Endothelial cell of umbilical vein (primary cell): ENCODE measurements at regions of chr10 and their contacts with region 1.

Region 1: DNA sequence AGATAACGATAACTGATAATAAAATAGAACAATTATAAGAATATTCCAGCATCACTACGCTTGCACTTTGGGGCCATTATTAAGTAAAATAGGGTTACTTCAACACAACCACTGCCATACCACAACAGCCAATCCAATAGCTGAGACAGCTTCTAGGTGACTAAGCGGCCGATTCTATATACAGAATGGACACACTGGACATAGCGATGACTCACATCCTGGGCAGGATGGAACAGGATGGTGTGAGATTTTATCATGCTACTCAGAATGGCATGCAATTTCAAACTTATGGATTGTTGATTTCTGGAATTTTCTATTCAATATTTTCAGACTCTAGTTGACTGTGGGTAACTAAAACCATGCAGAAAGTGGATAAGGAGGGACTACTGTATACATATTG is 920.9 kb downstream of the LRMDA start:
- DNase-seq: peak; percentile 91
- H3K4me3 ChIP-seq: no peak overlapping the region
- H3K27ac ChIP-seq: peak overlapping the region; percentile 90
- H3K4me1 ChIP-seq: peaks cover 23% of the 10 kb centered on the region
- H3K27me3 ChIP-seq: no peaks in the 10 kb centered on the region
- CTCF ChIP-seq: no peak
- POLR2A ChIP-seq: peak; percentile 32

Region 2: GRCh38 chr10:75803816-75804552 is 548.3 kb before region 1 on chr10:
- CTCF ChIA-PET with region 1: no interaction called
- POLR2A ChIA-PET with region 1: no interaction called
- dilution Hi-C with region 1: no loop called
- intact Hi-C with region 1: no loop called
- DNase-seq: no peak
- H3K4me3 ChIP-seq: no peak overlapping the region
- H3K27ac ChIP-seq: no peak overlapping the region
- H3K4me1 ChIP-seq: no peaks in the 10 kb centered on the region
- H3K27me3 ChIP-seq: no peaks in the 10 kb centered on the region
- CTCF ChIP-seq: no peak
- POLR2A ChIP-seq: no peak

Region 3: GRCh38 chr10:76190634-76191270 is 161.5 kb before region 1 on chr10:
- CTCF ChIA-PET with region 1: no interaction called
- POLR2A ChIA-PET with region 1: no interaction called
- dilution Hi-C with region 1: no loop called
- intact Hi-C with region 1: no loop called
- DNase-seq: no peak
- H3K4me3 ChIP-seq: no peak overlapping the region
- H3K27ac ChIP-seq: no peak overlapping the region
- H3K4me1 ChIP-seq: no peaks in the 10 kb centered on the region
- H3K27me3 ChIP-seq: no peaks in the 10 kb centered on the region
- CTCF ChIP-seq: no peak
- POLR2A ChIP-seq: no peak

Region 4: GRCh38 chr10:76309741-76310587 is 42.3 kb before region 1 on chr10:
- CTCF ChIA-PET with region 1: no interaction called
- POLR2A ChIA-PET with region 1: no interaction called
- dilution Hi-C with region 1: no loop called
- intact Hi-C with region 1: no loop called
- DNase-seq: peak; percentile 31
- H3K4me3 ChIP-seq: no peak overlapping the region
- H3K27ac ChIP-seq: no peak overlapping the region
- H3K4me1 ChIP-seq: peaks cover 6% of the 10 kb centered on the region
- H3K27me3 ChIP-seq: no peaks in the 10 kb centered on the region
- CTCF ChIP-seq: no peak
- POLR2A ChIP-seq: no peak

Region 5: DNA sequence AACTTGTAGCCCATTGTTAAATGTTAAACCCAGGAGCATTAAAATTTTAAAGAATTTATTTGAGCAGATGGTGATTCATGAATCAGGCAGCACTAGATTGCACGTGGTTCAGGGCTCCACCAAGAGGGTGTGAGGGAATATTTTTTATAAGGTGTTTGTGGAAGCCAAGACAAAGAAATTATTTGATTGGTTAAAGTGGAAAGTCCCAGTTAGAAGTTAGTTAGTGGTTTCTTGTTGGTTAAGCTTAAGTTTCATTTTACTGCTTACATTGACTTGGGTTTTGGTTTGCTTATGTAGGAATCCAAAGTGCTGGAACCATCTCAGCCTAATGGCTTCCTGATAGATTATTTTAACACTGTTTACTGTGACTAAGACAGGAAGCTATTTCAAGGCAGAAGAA is 14.7 kb before region 1 on chr10:
- CTCF ChIA-PET with region 1: interaction called, 8 read pairs
- POLR2A ChIA-PET with region 1: interaction called, 5 read pairs
- dilution Hi-C with region 1: no loop called
- intact Hi-C with region 1: loop called (anchors 1 kb)
- DNase-seq: peak; percentile 85
- H3K4me3 ChIP-seq: no peak overlapping the region
- H3K27ac ChIP-seq: peak overlapping the region; percentile 14
- H3K4me1 ChIP-seq: peaks cover 17% of the 10 kb centered on the region
- H3K27me3 ChIP-seq: no peaks in the 10 kb centered on the region
- CTCF ChIP-seq: no peak
- POLR2A ChIP-seq: no peak

Region 6: DNA sequence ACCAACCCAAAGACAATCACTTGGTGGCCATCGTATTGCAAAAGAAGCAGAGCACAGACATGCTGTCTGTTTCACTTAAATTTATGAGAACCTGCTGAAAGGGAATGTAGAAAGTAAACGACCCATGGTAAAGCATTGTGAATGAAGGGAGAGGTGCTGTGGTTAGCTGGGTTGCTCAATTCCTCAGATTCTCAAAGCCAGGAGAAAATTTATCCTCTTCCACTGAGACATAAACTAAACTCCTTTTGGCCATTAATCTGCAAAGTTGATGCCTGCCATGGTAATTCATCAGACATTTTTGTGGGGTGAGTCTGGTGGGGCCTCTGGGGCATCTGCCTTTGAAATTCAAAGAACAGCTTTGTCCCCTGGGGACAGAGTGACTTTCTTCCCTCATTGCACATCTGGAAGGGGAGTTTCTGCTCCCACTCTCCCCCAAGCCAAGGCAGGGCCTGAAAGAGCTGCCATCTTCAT is 30.1 kb after region 1 on chr10:
- CTCF ChIA-PET with region 1: no interaction called
- POLR2A ChIA-PET with region 1: no interaction called
- dilution Hi-C with region 1: no loop called
- intact Hi-C with region 1: no loop called
- DNase-seq: no peak
- H3K4me3 ChIP-seq: no peak overlapping the region
- H3K27ac ChIP-seq: no peak overlapping the region
- H3K4me1 ChIP-seq: no peaks in the 10 kb centered on the region
- H3K27me3 ChIP-seq: no peaks in the 10 kb centered on the region
- CTCF ChIP-seq: no peak
- POLR2A ChIP-seq: no peak

Region 7: DNA sequence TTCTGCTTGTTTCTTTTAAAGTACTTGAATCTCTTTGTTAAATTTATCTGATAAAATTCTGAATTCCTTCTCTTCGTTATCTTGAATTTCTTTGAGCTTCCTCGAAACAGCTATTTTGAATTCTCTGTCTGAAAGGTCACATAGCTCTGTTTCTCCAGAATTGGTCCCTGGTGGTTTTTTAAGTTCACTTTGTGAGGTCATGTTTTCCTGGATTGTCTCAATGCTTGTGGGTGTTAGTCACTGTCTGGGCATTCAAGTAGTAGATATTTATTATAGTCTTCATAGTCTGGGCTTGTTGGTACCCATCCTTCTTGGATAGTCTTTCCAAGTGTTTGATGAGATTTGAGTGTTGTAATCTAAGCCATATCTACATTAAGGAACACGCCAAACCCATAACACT is 139.7 kb after region 1 on chr10:
- CTCF ChIA-PET with region 1: interaction called, 3 read pairs
- POLR2A ChIA-PET with region 1: no interaction called
- dilution Hi-C with region 1: no loop called
- intact Hi-C with region 1: loop called (anchors 5 kb)
- DNase-seq: peak; percentile 71
- H3K4me3 ChIP-seq: no peak overlapping the region
- H3K27ac ChIP-seq: peak overlapping the region; percentile 57
- H3K4me1 ChIP-seq: peaks cover 11% of the 10 kb centered on the region
- H3K27me3 ChIP-seq: no peaks in the 10 kb centered on the region
- CTCF ChIP-seq: no peak
- POLR2A ChIP-seq: no peak